ENCODE measurements at regions of chr6 and their contacts with region 1.

Region 1: DNA sequence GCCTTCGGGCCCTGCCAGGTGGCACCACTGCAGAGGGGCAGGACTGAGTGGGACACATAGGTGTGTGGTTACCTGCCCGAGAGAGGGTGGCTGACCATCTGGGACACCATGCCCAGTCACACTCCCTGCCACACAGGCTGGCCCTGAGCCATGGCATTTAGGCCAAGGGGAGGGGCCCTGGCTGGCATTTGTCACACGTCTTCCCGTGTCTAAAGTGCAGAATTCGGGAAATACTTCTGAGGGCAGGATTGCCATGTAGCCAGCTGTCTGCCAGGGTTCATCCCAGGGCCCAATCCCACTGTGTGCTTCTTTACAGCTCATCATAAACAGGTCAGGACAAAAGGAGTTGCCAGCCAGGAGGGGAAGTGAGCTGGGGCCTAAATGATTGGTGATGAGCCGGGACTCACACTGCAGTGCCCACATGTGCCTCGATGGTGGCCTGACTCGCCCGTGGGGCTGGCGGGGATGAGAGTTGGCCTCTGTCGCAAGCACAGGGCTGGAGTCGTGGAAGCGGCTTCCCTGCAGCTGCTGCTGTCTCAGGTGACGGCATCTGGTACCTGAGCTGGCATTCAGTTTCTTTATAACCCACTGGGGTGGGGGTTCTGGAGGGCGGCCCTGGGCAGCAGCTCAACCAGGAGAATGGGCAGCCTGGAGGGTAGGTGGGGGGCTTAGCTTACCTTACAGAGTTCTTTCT is 5.9 kb upstream of the UNC93A start:
- DNase-seq: no peak
- ATAC-seq: no peak
- H3K4me3 ChIP-seq: no peak overlapping the region
- H3K27ac ChIP-seq: no peak overlapping the region
- H3K4me1 ChIP-seq: no peaks in the 10 kb centered on the region
- H3K27me3 ChIP-seq: peaks cover 7% of the 10 kb centered on the region; the same call in 1 of the 2 replicates
- CTCF ChIP-seq: no peak
- POLR2A ChIP-seq: no peak
- RAD21 ChIP-seq: no peak

Region 2: DNA sequence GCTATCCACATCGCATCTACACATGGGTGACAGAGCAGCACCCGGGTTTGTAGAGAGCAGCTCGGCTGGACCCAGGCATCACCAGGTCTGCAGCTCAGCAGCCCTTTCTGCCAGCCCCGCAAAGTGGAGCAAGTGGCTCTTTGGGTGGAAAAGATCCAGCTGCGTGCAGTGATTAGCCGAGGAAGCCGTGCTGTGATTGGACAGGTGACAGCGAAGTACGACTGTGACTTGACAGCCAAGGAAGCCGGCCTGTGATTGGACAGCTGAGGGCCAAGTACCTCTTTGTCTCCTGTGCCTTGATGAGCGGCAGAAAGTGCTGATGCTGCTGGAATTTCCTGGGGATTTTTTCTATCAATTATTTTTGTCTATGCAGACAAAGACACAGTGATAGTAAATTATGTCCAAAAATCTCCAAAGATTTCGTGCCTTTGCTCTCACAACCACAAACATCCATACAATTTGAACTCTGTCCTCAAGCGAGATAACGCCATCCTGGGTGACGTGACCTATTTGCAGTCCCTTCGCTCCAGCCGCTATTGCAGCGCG is 65.2 kb before region 1 on chr6:
- CTCF ChIA-PET with region 1: no interaction called
- POLR2A ChIA-PET with region 1: no interaction called
- RAD21 ChIA-PET with region 1: no interaction called
- intact Hi-C with region 1: loop called (anchors 1 kb)
- DNase-seq: no peak
- ATAC-seq: no peak
- H3K4me3 ChIP-seq: no peak overlapping the region
- H3K27ac ChIP-seq: no peak overlapping the region
- H3K4me1 ChIP-seq: peaks cover 3 to 11% of the 10 kb centered on the region in 2 experiments; a peak in 3 of 4 replicates
- H3K27me3 ChIP-seq: peaks cover 7% of the 10 kb centered on the region; the same call in 1 of the 2 replicates
- CTCF ChIP-seq: no peak
- POLR2A ChIP-seq: no peak
- RAD21 ChIP-seq: no peak